ENCODE measurements at regions of chr2 and their contacts with region 1.

Region 1: GRCh38 chr2:189751080-189751658 is 11.4 kb downstream of the OSGEPL1 start:
- DNase-seq: peak; percentile 15
- ATAC-seq: peak; percentile 94
- H3K4me3 ChIP-seq: no peak overlapping the region
- H3K27ac ChIP-seq: no peak overlapping the region
- H3K4me1 ChIP-seq: no peaks in the 10 kb centered on the region
- H3K27me3 ChIP-seq: no peaks in the 10 kb centered on the region
- CTCF ChIP-seq: peak; percentile 67 to 78 (median 77); a peak in 5 of 6 replicates
- POLR2A ChIP-seq: no peak
- RAD21 ChIP-seq: peak; percentile 68

Region 2: DNA sequence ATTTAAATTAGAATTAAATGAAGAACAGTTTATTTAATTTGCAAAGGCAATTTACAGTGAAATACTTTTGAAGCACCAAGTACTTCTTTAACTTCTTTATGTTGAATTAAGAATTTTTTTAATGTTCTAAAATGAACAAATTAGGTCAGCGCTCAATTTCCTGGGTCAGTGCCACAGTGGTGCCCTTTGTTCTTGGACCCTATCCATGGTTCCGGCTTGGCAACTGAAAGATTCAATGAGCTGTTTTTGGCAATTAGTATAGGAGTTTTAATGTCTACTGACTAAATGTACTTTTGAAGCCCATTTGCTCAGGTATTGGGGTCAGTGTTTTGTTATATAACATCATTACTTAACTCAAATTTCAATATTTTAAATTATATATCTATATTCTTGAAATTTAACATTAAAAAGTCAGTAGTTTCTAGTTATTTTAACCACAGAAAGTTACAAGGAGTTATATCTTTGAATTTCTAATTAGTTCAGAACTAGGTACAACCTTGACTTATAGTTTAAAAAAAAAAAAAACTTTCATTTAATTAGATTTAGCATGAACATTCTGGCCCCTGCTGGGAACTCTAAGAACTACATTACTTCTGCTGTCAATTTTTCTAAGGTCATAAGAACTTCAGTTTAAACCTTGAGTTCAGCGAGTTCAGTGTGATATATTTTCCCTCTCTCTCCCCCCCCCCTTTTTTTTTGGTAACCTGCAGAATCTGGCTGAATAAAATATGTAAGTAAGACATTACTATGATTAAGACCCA is 318.9 kb after region 1 on chr2:
- CTCF ChIA-PET with region 1: interaction called, 5 read pairs
- POLR2A ChIA-PET with region 1: no interaction called
- RAD21 ChIA-PET with region 1: no interaction called
- intact Hi-C with region 1: loop called (anchors 2 kb)
- DNase-seq: peak; percentile 71
- ATAC-seq: 0 out of 2 replicates have a peak, but pooled peaks have one; percentile 32
- H3K4me3 ChIP-seq: no peak overlapping the region
- H3K27ac ChIP-seq: no peak overlapping the region
- H3K4me1 ChIP-seq: no peaks in the 10 kb centered on the region
- H3K27me3 ChIP-seq: no peaks in the 10 kb centered on the region
- CTCF ChIP-seq: peak; percentile 48 to 89 (median 58)
- POLR2A ChIP-seq: no peak
- RAD21 ChIP-seq: peak; percentile 85

Region 3: DNA sequence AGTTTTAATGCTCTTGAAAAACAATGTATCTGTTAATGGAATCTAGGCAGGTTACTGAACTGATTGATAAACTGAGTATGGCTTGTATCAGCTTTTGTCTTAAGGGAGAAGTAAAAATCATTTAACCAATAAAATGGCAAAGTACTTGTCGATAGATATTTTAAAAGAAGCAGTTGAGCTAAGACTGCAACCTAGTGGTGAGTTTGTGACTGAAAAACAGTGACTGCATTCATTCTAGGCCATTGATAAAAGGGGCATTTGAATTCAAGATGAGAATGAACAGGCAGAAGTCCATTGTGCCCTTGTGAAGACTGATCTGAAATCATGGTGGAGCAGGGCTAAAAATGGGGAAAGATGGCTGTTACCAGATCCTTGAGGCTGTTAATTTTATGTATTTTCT is 370.8 kb after region 1 on chr2:
- CTCF ChIA-PET with region 1: no interaction called
- POLR2A ChIA-PET with region 1: no interaction called
- RAD21 ChIA-PET with region 1: no interaction called
- intact Hi-C with region 1: loop called (anchors 1 kb)
- DNase-seq: peak; percentile 23
- ATAC-seq: peak; percentile 67
- H3K4me3 ChIP-seq: no peak overlapping the region
- H3K27ac ChIP-seq: no peak overlapping the region
- H3K4me1 ChIP-seq: no peaks in the 10 kb centered on the region
- H3K27me3 ChIP-seq: no peaks in the 10 kb centered on the region
- CTCF ChIP-seq: peak; percentile 44 to 62 (median 61); a peak in 5 of 6 replicates
- POLR2A ChIP-seq: no peak
- RAD21 ChIP-seq: peak; percentile 61